ENCODE measurements at regions of chr11 and their contacts with region 1.

Region 1: GRCh38 chr11:127003260-127003981 is 2.9 kb upstream of the KIRREL3 start:
- DNase-seq: peak in 3 of 4 donors; percentile 15 to 33 (median 28)
- ATAC-seq: peak; percentile 50
- H3K4me3 ChIP-seq: no peak overlapping the region
- H3K27ac ChIP-seq: no peak overlapping the region
- H3K4me1 ChIP-seq: peaks cover 17% of the 10 kb centered on the region
- H3K27me3 ChIP-seq: peaks cover 3 to 14% of the 10 kb centered on the region in 2 donors
- CTCF ChIP-seq: peak in 4 of 7 experiments; percentile 15 to 33 (median 30)
- POLR2A ChIP-seq: no peak

Region 2: GRCh38 chr11:126440792-126441514 is 562.5 kb before region 1 on chr11:
- intact Hi-C with region 1: loop called (anchors 10 kb)
- DNase-seq: peak; percentile 74 to 81 (median 80)
- ATAC-seq: peak; percentile 85
- H3K4me3 ChIP-seq: no peak overlapping the region
- H3K27ac ChIP-seq: no peak overlapping the region
- H3K4me1 ChIP-seq: peaks cover 9% of the 10 kb centered on the region
- H3K27me3 ChIP-seq: peaks cover 0 to 12% of the 10 kb centered on the region in 2 donors
- CTCF ChIP-seq: peak; percentile 91 to 96 (median 95)
- POLR2A ChIP-seq: no peak

Region 3: GRCh38 chr11:127288926-127289325 is 285.5 kb after region 1 on chr11:
- intact Hi-C with region 1: no loop called
- DNase-seq: no peak
- ATAC-seq: no peak
- H3K4me3 ChIP-seq: no peak overlapping the region
- H3K27ac ChIP-seq: no peak overlapping the region
- H3K4me1 ChIP-seq: no peaks in the 10 kb centered on the region
- H3K27me3 ChIP-seq: no peaks in the 10 kb centered on the region
- CTCF ChIP-seq: no peak
- POLR2A ChIP-seq: no peak

Measured in body of pancreas (tissue), 4 donors.